PC-9 (cell line): ENCODE measurements at regions of chr1 and their contacts with region 1.

Region 1: GRCh38 chr1:174982971-174983689 is 16.6 kb upstream of the CACYBP start:
- DNase-seq: peak in 1 of 2 experiments; percentile 59
- H3K4me3 ChIP-seq: no peak overlapping the region
- H3K27ac ChIP-seq: no peak overlapping the region
- H3K4me1 ChIP-seq: no peaks in the 10 kb centered on the region
- H3K27me3 ChIP-seq: no peaks in the 10 kb centered on the region
- CTCF ChIP-seq: peak; percentile 88

Region 2: GRCh38 chr1:174580801-174581200 is 402.3 kb before region 1 on chr1:
- CTCF ChIA-PET with region 1: no interaction called
- POLR2A ChIA-PET with region 1: no interaction called
- intact Hi-C with region 1: no loop called
- DNase-seq: no peak
- H3K4me3 ChIP-seq: no peak overlapping the region
- H3K27ac ChIP-seq: no peak overlapping the region
- H3K4me1 ChIP-seq: no peaks in the 10 kb centered on the region
- H3K27me3 ChIP-seq: no peaks in the 10 kb centered on the region
- CTCF ChIP-seq: no peak

Region 3: GRCh38 chr1:174769961-174770549 is 213.1 kb before region 1 on chr1:
- CTCF ChIA-PET with region 1: no interaction called
- POLR2A ChIA-PET with region 1: no interaction called
- intact Hi-C with region 1: loop called (anchors 5 kb)
- DNase-seq: peak in 1 of 2 experiments; percentile 66
- H3K4me3 ChIP-seq: no peak overlapping the region
- H3K27ac ChIP-seq: no peak overlapping the region
- H3K4me1 ChIP-seq: no peaks in the 10 kb centered on the region
- H3K27me3 ChIP-seq: no peaks in the 10 kb centered on the region
- CTCF ChIP-seq: peak; percentile 90

Region 4: DNA sequence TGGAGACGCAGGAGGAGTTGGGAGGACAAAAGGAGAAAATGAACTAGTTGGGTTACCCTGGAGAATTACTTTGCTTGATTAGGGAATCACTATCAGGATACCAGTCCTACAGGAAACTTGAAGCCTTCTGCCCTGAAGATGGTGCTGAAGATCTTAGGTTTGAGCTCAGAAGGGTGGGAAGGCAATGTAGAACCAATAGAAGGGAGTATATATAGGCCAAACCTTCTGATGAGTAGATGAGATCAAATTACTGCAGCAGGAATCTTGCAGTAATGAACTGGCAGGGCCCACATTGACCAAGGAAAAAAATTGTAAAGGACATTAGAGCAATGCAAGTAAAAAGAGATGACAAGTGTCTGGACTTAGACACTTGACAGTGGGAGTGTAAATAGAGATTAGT is 99.7 kb before region 1 on chr1:
- CTCF ChIA-PET with region 1: interaction called, 5 read pairs
- POLR2A ChIA-PET with region 1: no interaction called
- intact Hi-C with region 1: loop called (anchors 2 kb)
- DNase-seq: peak; percentile 12 to 73
- H3K4me3 ChIP-seq: no peak overlapping the region
- H3K27ac ChIP-seq: no peak overlapping the region
- H3K4me1 ChIP-seq: peaks cover 7% of the 10 kb centered on the region; the same call in 1 of the 2 replicates
- H3K27me3 ChIP-seq: no peaks in the 10 kb centered on the region
- CTCF ChIP-seq: peak; percentile 55